ENCODE measurements at regions of chr21 and their contacts with region 1.

Region 1: GRCh38 chr21:39137248-39138178 is 45.7 kb downstream of the PSMG1 start:
- DNase-seq: no peak
- H3K4me3 ChIP-seq: no peak overlapping the region
- H3K27ac ChIP-seq: peak overlapping the region in 7 of 8 donors; percentile 29 to 63 (median 48)
- H3K4me1 ChIP-seq: peaks cover 5 to 29% (median 13%) of the 10 kb centered on the region in 6 donors
- H3K27me3 ChIP-seq: no peaks in the 10 kb centered on the region
- CTCF ChIP-seq: no peak
- POLR2A ChIP-seq: no peak

Region 2: DNA sequence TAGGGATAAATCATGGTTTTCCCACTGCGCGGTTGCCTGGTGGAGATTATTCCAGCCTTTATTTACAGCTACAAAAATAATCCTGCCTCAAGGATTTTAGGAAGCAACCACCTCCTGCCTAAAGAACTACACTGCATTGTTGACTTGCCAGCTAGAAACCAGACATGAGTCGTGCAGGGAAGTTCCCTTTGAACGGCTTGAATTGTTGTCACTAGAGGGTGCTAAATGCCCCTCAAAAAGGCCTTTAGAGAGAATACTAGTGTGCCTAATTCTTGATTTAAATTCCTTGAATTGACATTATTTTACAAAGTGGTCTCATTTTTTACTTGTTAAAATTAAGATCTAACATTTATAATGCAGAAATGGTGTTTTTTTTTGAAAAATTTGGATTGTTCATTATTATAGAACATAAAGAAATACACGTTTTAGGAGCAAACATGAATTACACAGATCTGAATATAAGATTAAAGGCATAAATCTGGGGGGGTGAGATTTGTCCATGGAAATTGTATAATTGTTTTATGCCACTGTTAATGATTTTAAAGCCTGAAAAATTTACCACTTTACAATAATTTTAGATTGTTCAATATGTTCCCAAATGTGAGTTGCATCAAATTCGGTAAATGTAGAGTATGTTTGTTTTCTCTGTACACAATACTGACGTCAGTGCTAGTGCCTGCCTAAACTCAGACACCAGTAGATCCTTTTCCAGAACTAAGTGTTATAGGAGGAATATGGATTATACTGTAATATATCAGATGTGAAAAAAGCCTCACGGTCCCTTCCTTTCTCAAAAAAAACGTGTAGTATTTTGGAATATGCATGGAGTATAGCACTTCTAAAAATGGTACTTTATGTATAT is 631.6 kb before region 1 on chr21:
- intact Hi-C with region 1: loop called (anchors 10 kb)
- DNase-seq: no peak
- H3K4me3 ChIP-seq: peak overlapping the region in 1 of 8 donors; percentile 4
- H3K27ac ChIP-seq: peak overlapping the region in 6 of 8 donors; percentile 14 to 50 (median 38)
- H3K4me1 ChIP-seq: peaks cover 0 to 45% (median 19%) of the 10 kb centered on the region in 6 donors
- H3K27me3 ChIP-seq: peaks cover 0 to 7% (median 0%) of the 10 kb centered on the region in 7 donors
- CTCF ChIP-seq: peak; percentile 20 to 74 (median 60)
- POLR2A ChIP-seq: no peak

Region 3: DNA sequence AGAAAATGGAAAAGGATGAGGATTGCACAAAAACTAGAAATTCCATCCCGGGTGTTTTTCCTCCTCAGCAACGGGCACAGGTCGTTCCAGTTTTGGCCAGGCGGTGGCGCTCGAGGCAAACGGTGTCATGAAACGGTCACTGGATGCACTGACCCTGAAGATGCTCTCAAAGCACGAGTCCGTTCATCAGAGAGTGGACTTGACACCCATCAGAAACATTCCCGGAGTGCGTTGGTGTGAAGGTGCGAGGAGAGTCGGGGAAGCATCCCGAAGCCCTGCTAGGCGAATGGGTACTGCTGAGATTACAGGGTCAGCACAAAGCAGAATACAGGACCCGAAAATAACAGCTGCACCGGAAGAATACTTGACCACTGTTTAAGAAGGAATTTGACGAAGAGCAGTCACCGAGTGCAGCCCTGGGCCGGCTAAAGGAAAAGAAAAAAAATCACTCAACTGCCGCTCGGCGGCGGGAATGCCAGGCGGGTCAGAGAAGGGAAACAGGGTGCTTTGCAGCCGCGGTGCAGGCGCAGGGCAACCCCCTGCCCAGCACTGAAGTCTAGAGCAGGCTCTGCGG is 403.5 kb before region 1 on chr21:
- intact Hi-C with region 1: loop called (anchors 2 kb)
- DNase-seq: peak; percentile 94
- H3K4me3 ChIP-seq: peak overlapping the region in 7 of 8 donors; percentile 25 to 59 (median 28)
- H3K27ac ChIP-seq: peak overlapping the region; percentile 45 to 88 (median 80)
- H3K4me1 ChIP-seq: peaks cover 3 to 27% (median 18%) of the 10 kb centered on the region in 6 donors
- H3K27me3 ChIP-seq: peaks cover 0 to 19% (median 0%) of the 10 kb centered on the region in 7 donors
- CTCF ChIP-seq: peak; percentile 85 to 97 (median 94)
- POLR2A ChIP-seq: no peak

Region 4: DNA sequence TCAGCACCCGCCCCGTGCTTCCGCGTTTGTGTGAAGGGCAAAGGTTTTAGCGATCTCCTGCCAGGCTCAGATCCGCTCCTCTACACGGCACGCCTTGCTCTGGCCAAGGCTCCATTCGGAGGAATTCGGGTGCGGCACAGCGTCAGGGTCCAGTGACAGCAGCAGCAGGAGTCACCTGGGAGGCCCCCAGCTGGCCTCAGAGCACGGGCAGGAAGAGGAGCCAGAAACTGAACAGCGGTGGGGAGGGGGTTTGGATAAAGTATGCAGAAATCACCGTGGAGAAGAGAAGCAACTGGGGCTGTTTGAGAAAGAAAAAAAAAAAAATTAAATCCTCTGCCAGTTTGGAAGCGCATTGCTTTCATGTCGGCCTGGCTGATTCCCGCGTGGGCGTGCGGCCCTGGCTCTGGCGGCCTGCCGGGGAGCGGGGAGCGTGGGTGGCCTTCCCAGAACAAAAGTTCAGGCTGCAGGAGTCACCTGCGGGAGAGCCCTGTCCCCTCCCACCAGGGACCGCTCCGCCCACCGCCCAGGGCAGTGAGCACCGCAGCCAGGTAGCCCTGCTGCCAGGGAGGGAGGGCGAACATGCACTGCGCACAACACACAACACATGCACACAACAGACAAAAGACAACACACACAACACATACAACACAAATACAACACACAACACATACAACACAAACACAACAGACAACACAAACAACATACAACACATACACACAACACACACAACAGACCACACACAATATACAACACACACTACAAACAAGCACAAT is 224.2 kb before region 1 on chr21:
- intact Hi-C with region 1: no loop called
- DNase-seq: peak; percentile 85
- H3K4me3 ChIP-seq: no peak overlapping the region
- H3K27ac ChIP-seq: peak overlapping the region; percentile 19 to 77 (median 63)
- H3K4me1 ChIP-seq: peaks cover 0 to 36% (median 10%) of the 10 kb centered on the region in 6 donors
- H3K27me3 ChIP-seq: peaks cover 0 to 5% (median 0%) of the 10 kb centered on the region in 7 donors
- CTCF ChIP-seq: no peak
- POLR2A ChIP-seq: no peak

Region 5: GRCh38 chr21:39217356-39218081 is 80.0 kb after region 1 on chr21:
- intact Hi-C with region 1: no loop called
- DNase-seq: no peak
- H3K4me3 ChIP-seq: no peak overlapping the region
- H3K27ac ChIP-seq: no peak overlapping the region
- H3K4me1 ChIP-seq: no peaks in the 10 kb centered on the region
- H3K27me3 ChIP-seq: no peaks in the 10 kb centered on the region
- CTCF ChIP-seq: no peak
- POLR2A ChIP-seq: no peak